ENCODE measurements at regions of chr16 and their contacts with region 1.

Region 1: GRCh38 chr16:22297114-22297878 is at the start of gene POLR3E:
- DNase-seq: peak; percentile 99 to 100 (median 100)
- ATAC-seq: peak; percentile 82
- H3K4me3 ChIP-seq: peak within 1 kb of the TSS; percentile 87 to 94
- H3K4me3 Mint-ChIP-seq: peak within 1 kb of the TSS; percentile 97
- H3K27ac ChIP-seq: peak within 1 kb of the TSS; percentile 98 to 99
- H3K27ac Mint-ChIP-seq: peak within 1 kb of the TSS; percentile 100
- H3K4me1 ChIP-seq: peaks cover 18% of the 10 kb centered on the region
- H3K4me1 Mint-ChIP-seq: peaks cover 43% of the 10 kb centered on the region
- H3K27me3 ChIP-seq: no peaks in the 10 kb centered on the region
- H3K27me3 Mint-ChIP-seq: no peaks in the 10 kb centered on the region
- CTCF ChIP-seq: peak; percentile 78
- total RNA-seq, gene POLR3E: 300 to 307 TPM

Region 2: GRCh38 chr16:20900299-20901067 is 1396.8 kb before region 1 on chr16 and contains the starts of genes DCUN1D3 and LYRM1:
- CTCF ChIA-PET with region 1: no interaction called
- POLR2A ChIA-PET with region 1: no interaction called
- intact Hi-C with region 1: loop called in 1 of 2 experiments (anchors 5 kb)
- DNase-seq: peak; percentile 63 to 96 (median 85)
- ATAC-seq: peak; percentile 73
- H3K4me3 ChIP-seq: peak within 1 kb of the TSS; percentile 80 to 95
- H3K4me3 Mint-ChIP-seq: peak within 1 kb of the TSS; percentile 96
- H3K27ac ChIP-seq: peak within 1 kb of the TSS; percentile 93 to 99
- H3K27ac Mint-ChIP-seq: peak within 1 kb of the TSS; percentile 98
- H3K4me1 ChIP-seq: peaks cover 40% of the 10 kb centered on the region
- H3K4me1 Mint-ChIP-seq: peaks cover 69% of the 10 kb centered on the region
- H3K27me3 ChIP-seq: no peaks in the 10 kb centered on the region
- H3K27me3 Mint-ChIP-seq: no peaks in the 10 kb centered on the region
- CTCF ChIP-seq: no peak
- total RNA-seq, gene DCUN1D3: 2.3 to 2.6 TPM
- total RNA-seq, gene LYRM1: 12.4 to 12.7 TPM

Region 3: DNA sequence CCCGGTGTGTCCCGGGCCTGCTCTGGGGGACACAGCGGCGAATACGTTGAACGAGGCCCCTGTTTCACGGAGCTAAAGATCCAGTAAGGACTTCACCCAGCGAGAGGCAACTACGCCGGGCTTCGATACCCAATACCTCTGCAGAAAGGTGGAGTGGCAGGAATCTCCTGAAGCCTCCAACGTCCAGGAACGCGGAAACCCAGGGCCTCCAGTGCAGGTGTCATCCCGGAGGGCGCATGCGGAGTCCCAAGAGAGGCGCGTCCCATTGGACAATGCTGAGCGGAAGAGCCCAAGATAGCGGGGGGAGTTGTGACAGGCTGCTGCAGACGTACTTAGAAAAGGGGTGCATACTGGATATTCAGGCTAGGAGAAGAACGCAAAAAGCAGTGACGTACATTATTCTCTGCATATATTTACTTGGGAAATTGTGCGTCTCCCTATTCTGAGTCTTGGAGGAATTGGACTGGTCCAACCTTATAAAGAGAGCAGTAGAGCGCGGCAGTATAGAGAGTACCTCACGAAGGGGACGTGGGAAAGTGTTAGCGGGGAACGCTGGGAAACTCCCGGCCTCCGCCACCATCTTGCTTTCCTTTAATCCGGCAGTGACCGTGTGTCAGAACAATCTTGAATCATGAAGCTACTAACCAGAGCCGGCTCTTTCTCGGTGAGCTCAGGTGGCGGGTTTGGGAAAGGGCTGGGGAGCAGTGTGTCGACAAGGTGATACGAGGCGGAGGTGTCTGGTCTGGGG is 344.3 kb before region 1 on chr16 and contains the start of gene UQCRC2:
- CTCF ChIA-PET with region 1: interaction called, 4 read pairs
- POLR2A ChIA-PET with region 1: no interaction called
- intact Hi-C with region 1: loop called (anchors 1 kb)
- DNase-seq: peak; percentile 70 to 96 (median 87)
- ATAC-seq: peak; percentile 89
- H3K4me3 ChIP-seq: peak within 1 kb of the TSS; percentile 85 to 87
- H3K4me3 Mint-ChIP-seq: peak within 1 kb of the TSS; percentile 100
- H3K27ac ChIP-seq: peak within 1 kb of the TSS; percentile 93 to 95
- H3K27ac Mint-ChIP-seq: peak within 1 kb of the TSS; percentile 98
- H3K4me1 ChIP-seq: peaks cover 36% of the 10 kb centered on the region
- H3K4me1 Mint-ChIP-seq: peaks cover 69% of the 10 kb centered on the region
- H3K27me3 ChIP-seq: no peaks in the 10 kb centered on the region
- H3K27me3 Mint-ChIP-seq: no peaks in the 10 kb centered on the region
- CTCF ChIP-seq: no peak
- total RNA-seq, gene UQCRC2: 177 to 186 TPM

Region 4: GRCh38 chr16:22007509-22008214 is 289.6 kb before region 1 on chr16 and contains the start of gene MOSMO:
- CTCF ChIA-PET with region 1: interaction called, 8 read pairs
- POLR2A ChIA-PET with region 1: interaction called, 7 read pairs
- intact Hi-C with region 1: loop called in 1 of 2 experiments (anchors 2 kb)
- DNase-seq: peak; percentile 30 to 81 (median 67)
- ATAC-seq: peak; percentile 84
- H3K4me3 ChIP-seq: peak within 1 kb of the TSS; percentile 93 to 95
- H3K4me3 Mint-ChIP-seq: peak within 1 kb of the TSS; percentile 88
- H3K27ac ChIP-seq: peak within 1 kb of the TSS; percentile 70 to 75
- H3K27ac Mint-ChIP-seq: peak within 1 kb of the TSS; percentile 88
- H3K4me1 ChIP-seq: peaks cover 24% of the 10 kb centered on the region
- H3K4me1 Mint-ChIP-seq: peaks cover 46% of the 10 kb centered on the region
- H3K27me3 ChIP-seq: no peaks in the 10 kb centered on the region
- H3K27me3 Mint-ChIP-seq: no peaks in the 10 kb centered on the region
- CTCF ChIP-seq: no peak
- total RNA-seq, gene MOSMO: 2.4 TPM

Region 5: GRCh38 chr16:22183901-22184614 is 113.2 kb before region 1 on chr16:
- CTCF ChIA-PET with region 1: interaction called, 13 read pairs
- POLR2A ChIA-PET with region 1: interaction called, 49 read pairs
- intact Hi-C with region 1: loop called in 1 of 2 experiments (anchors 1 kb)
- DNase-seq: peak in 4 of 9 experiments; percentile 24 to 62 (median 40)
- ATAC-seq: peak; percentile 35
- H3K4me3 ChIP-seq: no peak overlapping the region
- H3K4me3 Mint-ChIP-seq: no peak overlapping the region
- H3K27ac ChIP-seq: no peak overlapping the region
- H3K27ac Mint-ChIP-seq: no peak overlapping the region
- H3K4me1 ChIP-seq: peaks cover 16% of the 10 kb centered on the region
- H3K4me1 Mint-ChIP-seq: peaks cover 18% of the 10 kb centered on the region
- H3K27me3 ChIP-seq: no peaks in the 10 kb centered on the region
- H3K27me3 Mint-ChIP-seq: no peaks in the 10 kb centered on the region
- CTCF ChIP-seq: no peak

Region 6: DNA sequence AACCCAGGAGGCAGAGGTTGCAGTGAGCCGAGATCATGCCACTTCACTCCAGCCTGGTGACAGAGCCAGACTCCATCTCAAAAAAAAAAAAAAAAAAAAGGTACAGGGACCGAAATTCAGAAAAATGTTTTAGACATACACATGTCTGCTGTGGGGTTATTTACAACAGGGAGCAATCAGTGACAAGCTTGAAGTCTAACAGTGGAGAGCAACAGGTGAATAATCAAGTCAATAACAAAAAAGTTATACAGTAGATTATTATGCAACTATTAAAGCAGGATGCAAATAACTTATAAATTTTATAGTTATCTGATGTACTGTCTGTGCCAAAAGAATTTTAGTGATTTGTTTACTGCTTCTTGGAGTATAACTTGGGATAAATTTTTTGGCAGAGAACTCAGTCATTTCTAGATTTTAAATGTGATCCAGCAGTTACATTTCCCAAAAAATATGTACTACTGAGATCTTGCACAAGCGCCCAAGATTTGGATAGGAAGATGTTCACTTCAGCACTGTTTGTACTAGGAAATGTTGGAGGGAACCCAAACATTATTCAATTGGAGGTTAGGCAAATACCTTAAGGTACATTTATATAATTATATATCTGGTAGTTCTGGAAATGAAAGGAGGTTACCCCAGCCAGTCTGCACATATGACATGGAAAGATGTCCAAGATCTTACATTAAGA is 57.1 kb before region 1 on chr16:
- CTCF ChIA-PET with region 1: interaction called, 3 read pairs
- POLR2A ChIA-PET with region 1: no interaction called
- intact Hi-C with region 1: loop called in 1 of 2 experiments (anchors 2 kb)
- DNase-seq: no peak
- ATAC-seq: no peak
- H3K4me3 ChIP-seq: no peak overlapping the region
- H3K4me3 Mint-ChIP-seq: no peak overlapping the region
- H3K27ac ChIP-seq: peak overlapping the region in 1 of 2 experiments; percentile 47
- H3K27ac Mint-ChIP-seq: peak overlapping the region; percentile 69
- H3K4me1 ChIP-seq: peaks cover 24% of the 10 kb centered on the region
- H3K4me1 Mint-ChIP-seq: peaks cover 27% of the 10 kb centered on the region
- H3K27me3 ChIP-seq: no peaks in the 10 kb centered on the region
- H3K27me3 Mint-ChIP-seq: no peaks in the 10 kb centered on the region
- CTCF ChIP-seq: no peak

Region 7: DNA sequence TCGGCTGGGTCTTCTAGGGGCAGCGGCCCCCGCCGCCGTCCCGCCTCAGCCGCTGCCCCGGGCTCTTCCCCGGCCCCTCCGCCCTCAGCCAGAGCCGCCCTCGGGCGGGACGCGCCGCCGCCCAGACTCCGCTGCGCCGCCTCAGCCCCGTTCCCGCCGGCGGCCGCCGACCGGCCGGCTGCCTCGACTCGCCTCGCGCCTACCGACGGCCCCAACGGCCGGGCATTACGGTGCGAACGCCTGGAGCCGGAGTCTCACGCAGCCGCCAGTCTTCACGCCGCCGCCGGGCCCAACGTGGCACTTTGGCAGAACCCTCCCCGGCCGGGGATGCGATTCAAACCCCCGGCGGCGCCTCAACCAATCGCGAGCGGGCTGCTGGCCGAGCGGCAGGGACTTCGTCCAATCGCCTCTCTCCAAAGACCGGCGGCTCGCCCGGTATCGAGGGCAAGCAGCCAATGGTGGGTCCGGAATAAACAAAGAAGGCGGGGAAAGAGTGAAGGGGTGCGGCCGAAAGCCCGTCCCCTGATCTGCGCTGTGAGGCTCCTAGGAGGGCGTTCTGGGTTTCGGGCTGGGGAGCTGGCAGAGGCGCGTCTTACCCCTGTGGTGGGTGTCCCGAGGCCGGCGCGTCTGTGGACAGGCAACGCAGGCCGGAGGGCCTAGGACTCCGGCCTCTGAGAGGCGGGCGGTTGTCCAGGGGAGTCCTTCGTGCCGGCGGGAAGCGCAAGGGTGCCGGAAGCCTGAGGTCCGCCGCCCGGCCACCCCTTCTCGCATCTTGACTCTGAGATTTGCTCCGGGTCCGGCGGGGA is 77.2 kb after region 1 on chr16 and contains the start of gene CDR2:
- CTCF ChIA-PET with region 1: no interaction called
- POLR2A ChIA-PET with region 1: interaction called, 6 read pairs
- intact Hi-C with region 1: loop called in 1 of 2 experiments (anchors 1 kb)
- DNase-seq: peak; percentile 96 to 99 (median 98)
- ATAC-seq: peak; percentile 92
- H3K4me3 ChIP-seq: peak within 1 kb of the TSS; percentile 60 to 71
- H3K4me3 Mint-ChIP-seq: peak within 1 kb of the TSS; percentile 97
- H3K27ac ChIP-seq: peak within 1 kb of the TSS; percentile 51 to 77
- H3K27ac Mint-ChIP-seq: peak within 1 kb of the TSS; percentile 95
- H3K4me1 ChIP-seq: peaks cover 34% of the 10 kb centered on the region
- H3K4me1 Mint-ChIP-seq: peaks cover 49% of the 10 kb centered on the region
- H3K27me3 ChIP-seq: no peaks in the 10 kb centered on the region
- H3K27me3 Mint-ChIP-seq: no peaks in the 10 kb centered on the region
- CTCF ChIP-seq: no peak
- total RNA-seq, gene CDR2: 119 to 120 TPM

Measured in CD8-positive, alpha-beta T cell (primary cell).